ENCODE measurements at regions of chr14 and their contacts with region 1.

Region 1: DNA sequence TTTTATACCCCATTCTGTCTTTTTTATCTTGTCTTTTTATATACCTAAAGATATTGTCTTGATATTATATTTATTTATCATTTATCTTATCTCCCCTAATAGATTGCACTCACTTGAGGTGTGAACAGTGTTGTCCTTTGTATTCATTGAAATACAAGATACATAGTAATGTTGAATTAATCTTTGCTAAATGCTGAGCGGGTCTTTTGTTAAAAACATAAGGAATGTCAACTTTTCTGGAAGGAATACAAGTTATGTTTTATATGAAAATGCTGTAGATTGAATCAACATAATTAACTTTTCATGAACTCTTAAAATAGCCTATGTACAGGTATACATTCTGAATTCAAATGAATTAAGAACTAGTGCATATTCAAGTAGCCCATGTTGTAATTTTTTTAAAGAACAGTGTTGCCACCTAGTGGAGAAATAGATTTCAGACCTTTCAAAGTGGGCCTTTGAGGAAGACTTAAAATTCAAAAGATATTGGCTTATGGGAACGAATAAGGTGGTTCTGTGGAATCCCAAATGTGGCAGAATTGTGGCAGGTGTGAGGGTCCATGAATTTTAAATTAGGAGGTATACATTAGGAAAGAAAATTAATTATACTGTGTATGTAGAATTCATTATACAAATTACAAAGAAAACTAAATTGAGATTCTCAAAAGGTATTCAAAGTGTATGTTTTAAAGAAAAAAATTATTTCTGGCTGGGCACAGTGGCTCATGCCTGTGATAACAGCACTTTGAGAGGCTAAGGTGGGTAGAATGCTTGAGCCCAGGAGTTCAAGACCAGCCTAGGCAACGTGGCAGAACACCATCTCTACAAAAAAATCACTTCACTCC is 19.1 kb downstream of the BBOF1 start:
- DNase-seq: peak; percentile 47
- H3K4me3 ChIP-seq: no peak overlapping the region
- H3K27ac ChIP-seq: no peak overlapping the region
- H3K4me1 ChIP-seq: no peaks in the 10 kb centered on the region
- H3K27me3 ChIP-seq: no peaks in the 10 kb centered on the region
- CTCF ChIP-seq: peak; percentile 64 to 65

Region 2: DNA sequence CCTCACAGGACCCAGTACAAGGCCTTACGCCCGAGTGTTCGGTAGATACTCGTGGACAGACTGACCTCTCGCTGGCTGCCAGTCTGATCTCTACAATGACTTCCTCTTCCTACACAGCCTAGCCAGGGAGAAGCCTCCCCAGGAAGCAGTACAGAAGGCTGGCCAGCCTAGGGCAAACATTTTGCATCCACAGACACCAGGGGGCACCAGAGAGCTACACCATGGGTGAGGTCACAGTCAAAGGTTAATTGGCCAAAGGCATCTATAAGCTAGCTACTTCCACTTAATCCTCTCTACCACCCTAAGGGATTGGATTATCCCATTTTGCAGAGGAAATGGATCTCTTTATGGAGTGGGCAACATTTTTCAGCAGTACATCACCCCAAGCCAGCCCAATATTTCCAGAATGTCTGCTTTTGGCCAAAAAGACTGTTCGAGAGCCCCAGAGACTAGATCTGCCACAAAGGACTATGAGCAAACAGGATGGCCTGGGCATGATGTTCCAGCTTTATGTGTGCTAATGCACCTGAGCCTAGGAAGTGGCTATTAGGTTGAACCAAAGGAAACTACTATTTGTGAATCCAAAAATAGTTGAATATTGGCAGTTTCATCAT is 309.4 kb before region 1 on chr14:
- CTCF ChIA-PET with region 1: no interaction called
- dilution Hi-C with region 1: no loop called
- in situ Hi-C with region 1: no loop called
- intact Hi-C with region 1: loop called (anchors 10 kb)
- DNase-seq: peak; percentile 50
- H3K4me3 ChIP-seq: no peak overlapping the region
- H3K27ac ChIP-seq: no peak overlapping the region
- H3K4me1 ChIP-seq: peaks cover 42% of the 10 kb centered on the region
- H3K27me3 ChIP-seq: no peaks in the 10 kb centered on the region
- CTCF ChIP-seq: peak; percentile 92 to 95